Endothelial cell of umbilical vein (primary cell): ENCODE measurements at regions of chr15 and their contacts with region 1.

Region 1: DNA sequence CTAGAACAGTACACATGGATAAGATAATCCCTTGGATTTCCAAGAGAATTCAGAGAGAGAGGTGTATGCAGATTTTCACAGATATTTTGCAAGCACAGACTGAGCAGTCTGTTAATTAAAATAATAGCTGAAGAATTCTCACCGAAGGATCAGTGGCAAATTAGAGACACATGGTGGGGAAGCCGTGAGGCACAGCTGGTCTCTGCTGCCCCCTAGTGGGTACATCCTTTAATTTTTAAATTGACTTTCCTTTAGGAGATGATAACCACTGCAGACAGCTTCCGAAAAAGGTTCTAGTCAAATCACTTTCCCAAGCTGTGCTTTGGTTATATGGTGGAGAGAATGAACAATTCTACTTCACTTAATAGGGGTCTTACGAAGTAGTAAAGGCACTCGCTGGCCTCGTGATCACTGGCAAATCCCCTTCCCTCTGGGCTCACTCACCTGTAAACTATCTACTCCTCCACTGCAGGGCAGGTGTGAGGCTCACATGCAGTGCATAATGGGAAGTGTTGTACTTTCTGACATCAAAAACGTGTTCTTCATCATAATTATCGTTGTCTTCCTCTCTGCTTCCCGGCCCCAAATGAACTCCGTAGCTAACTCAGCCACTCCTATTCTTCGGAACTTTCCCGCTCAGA is 19.5 kb downstream of the MESD start:
- DNase-seq: peak; percentile 64
- H3K4me3 ChIP-seq: no peak overlapping the region
- H3K27ac ChIP-seq: no peak overlapping the region
- H3K4me1 ChIP-seq: no peaks in the 10 kb centered on the region
- H3K27me3 ChIP-seq: no peaks in the 10 kb centered on the region
- CTCF ChIP-seq: peak; percentile 59 to 61
- POLR2A ChIP-seq: no peak

Region 2: DNA sequence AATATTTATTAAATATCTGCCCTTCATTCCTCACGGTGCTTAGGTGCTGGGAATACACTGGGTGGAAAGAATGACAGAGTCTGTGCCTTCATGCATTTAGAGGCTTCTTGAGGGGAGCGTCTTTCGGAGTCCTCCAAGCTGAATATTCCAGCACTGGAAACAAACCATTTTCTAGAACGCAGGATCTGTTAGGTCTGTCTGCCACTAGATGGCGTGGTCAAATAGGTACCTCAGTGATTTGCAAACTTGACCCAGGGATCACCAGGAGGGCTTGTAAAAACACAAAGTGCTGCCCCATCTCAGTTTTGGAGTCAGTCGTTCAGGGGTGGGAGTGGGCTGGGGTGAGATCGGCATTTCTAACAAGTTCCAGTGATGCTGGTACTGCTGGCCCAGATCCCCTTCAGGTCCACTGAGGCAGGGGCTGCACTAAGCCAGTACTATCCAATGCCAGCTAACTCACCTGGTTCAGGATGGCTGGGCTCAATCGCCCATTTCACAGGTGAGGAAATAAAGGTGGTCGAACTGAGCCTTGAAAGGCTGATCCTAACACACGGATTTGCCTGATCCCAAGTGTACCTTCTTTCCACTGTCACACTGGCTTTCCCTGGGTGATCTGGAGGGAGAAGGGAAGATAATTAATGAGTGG is 551.1 kb before region 1 on chr15:
- CTCF ChIA-PET with region 1: interaction called, 11 read pairs
- POLR2A ChIA-PET with region 1: no interaction called
- dilution Hi-C with region 1: no loop called
- intact Hi-C with region 1: loop called (anchors 1 kb)
- DNase-seq: peak; percentile 16
- H3K4me3 ChIP-seq: no peak overlapping the region
- H3K27ac ChIP-seq: no peak overlapping the region
- H3K4me1 ChIP-seq: no peaks in the 10 kb centered on the region
- H3K27me3 ChIP-seq: peaks cover 0 to 4% of the 10 kb centered on the region in 2 experiments
- CTCF ChIP-seq: peak; percentile 63 to 73
- POLR2A ChIP-seq: no peak

Region 3: GRCh38 chr15:80455668-80456442 is 514.3 kb before region 1 on chr15:
- CTCF ChIA-PET with region 1: interaction called, 101 read pairs
- POLR2A ChIA-PET with region 1: no interaction called
- dilution Hi-C with region 1: no loop called
- intact Hi-C with region 1: loop called (anchors 1 kb)
- DNase-seq: peak; percentile 63
- H3K4me3 ChIP-seq: no peak overlapping the region
- H3K27ac ChIP-seq: no peak overlapping the region
- H3K4me1 ChIP-seq: no peaks in the 10 kb centered on the region
- H3K27me3 ChIP-seq: peaks cover 1 to 3% of the 10 kb centered on the region in 2 experiments
- CTCF ChIP-seq: peak; percentile 85 to 94
- POLR2A ChIP-seq: no peak

Region 4: GRCh38 chr15:80660122-80660521 is 310.0 kb before region 1 on chr15:
- CTCF ChIA-PET with region 1: interaction called, 6 read pairs
- POLR2A ChIA-PET with region 1: no interaction called
- dilution Hi-C with region 1: no loop called
- intact Hi-C with region 1: loop called (anchors 2 kb)
- DNase-seq: peak; percentile 24
- H3K4me3 ChIP-seq: no peak overlapping the region
- H3K27ac ChIP-seq: no peak overlapping the region
- H3K4me1 ChIP-seq: no peaks in the 10 kb centered on the region
- H3K27me3 ChIP-seq: peaks cover 0 to under 1% of the 10 kb centered on the region in 2 experiments
- CTCF ChIP-seq: peak; percentile 17 to 30
- POLR2A ChIP-seq: no peak

Region 5: GRCh38 chr15:80893777-80894176 is 76.4 kb before region 1 on chr15:
- CTCF ChIA-PET with region 1: interaction called, 5 read pairs
- POLR2A ChIA-PET with region 1: no interaction called
- dilution Hi-C with region 1: no loop called
- intact Hi-C with region 1: loop called (anchors 5 kb)
- DNase-seq: no peak
- H3K4me3 ChIP-seq: no peak overlapping the region
- H3K27ac ChIP-seq: no peak overlapping the region
- H3K4me1 ChIP-seq: no peaks in the 10 kb centered on the region
- H3K27me3 ChIP-seq: no peaks in the 10 kb centered on the region
- CTCF ChIP-seq: no peak
- POLR2A ChIP-seq: no peak

Region 6: GRCh38 chr15:80934761-80935221 is 35.3 kb before region 1 on chr15:
- CTCF ChIA-PET with region 1: interaction called, 10 read pairs
- POLR2A ChIA-PET with region 1: no interaction called
- dilution Hi-C with region 1: no loop called
- intact Hi-C with region 1: loop called (anchors 2 kb)
- DNase-seq: peak; percentile 63
- H3K4me3 ChIP-seq: no peak overlapping the region
- H3K27ac ChIP-seq: peak overlapping the region; percentile 63
- H3K4me1 ChIP-seq: peaks cover 18% of the 10 kb centered on the region
- H3K27me3 ChIP-seq: no peaks in the 10 kb centered on the region
- CTCF ChIP-seq: no peak
- POLR2A ChIP-seq: no peak

Region 7: GRCh38 chr15:80957556-80957955 is 12.6 kb before region 1 on chr15:
- CTCF ChIA-PET with region 1: interaction called, 16 read pairs
- POLR2A ChIA-PET with region 1: no interaction called
- dilution Hi-C with region 1: no loop called
- intact Hi-C with region 1: no loop called
- DNase-seq: no peak
- H3K4me3 ChIP-seq: no peak overlapping the region
- H3K27ac ChIP-seq: no peak overlapping the region
- H3K4me1 ChIP-seq: no peaks in the 10 kb centered on the region
- H3K27me3 ChIP-seq: no peaks in the 10 kb centered on the region
- CTCF ChIP-seq: no peak
- POLR2A ChIP-seq: no peak

Region 8: DNA sequence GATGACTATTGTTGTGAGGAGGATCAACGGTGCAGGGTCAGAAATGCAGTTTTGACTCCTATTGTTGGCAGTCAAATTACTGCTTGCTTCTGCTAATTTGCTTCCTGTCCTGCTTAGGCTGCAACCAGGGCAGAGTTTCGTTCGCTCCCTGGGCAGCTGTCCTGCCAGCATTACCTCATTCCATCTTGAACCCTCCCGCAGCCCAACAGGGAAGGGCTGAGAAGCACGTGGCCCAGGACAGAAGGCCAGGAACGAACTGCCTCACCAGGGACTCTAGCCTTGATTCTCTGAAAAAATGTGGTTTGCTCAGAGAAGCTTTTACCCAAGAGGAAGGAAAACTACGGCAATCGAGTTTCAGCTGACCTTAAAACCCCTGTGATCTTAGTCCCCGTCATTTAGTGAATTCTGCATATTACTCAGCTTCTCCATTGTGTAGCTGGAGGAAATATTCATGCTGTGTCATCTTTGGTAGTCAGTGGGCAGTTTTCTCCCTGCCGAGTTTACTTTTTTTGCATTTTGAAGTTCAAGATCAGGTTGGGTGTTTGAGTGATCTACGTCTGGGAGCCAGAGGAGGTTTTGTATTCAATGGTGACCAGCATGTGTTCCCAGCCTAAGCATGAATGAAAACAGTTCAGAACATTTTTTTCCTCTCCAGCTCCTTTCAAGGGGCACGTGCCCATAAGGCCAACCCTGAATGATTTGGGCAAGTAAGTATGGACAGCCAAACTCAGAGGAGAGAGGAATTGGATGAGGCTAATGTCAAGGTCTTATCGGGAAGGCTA is 53.5 kb after region 1 on chr15:
- CTCF ChIA-PET with region 1: no interaction called
- POLR2A ChIA-PET with region 1: no interaction called
- dilution Hi-C with region 1: no loop called
- intact Hi-C with region 1: no loop called
- DNase-seq: peak; percentile 91
- H3K4me3 ChIP-seq: no peak overlapping the region
- H3K27ac ChIP-seq: peak overlapping the region; percentile 97
- H3K4me1 ChIP-seq: peaks cover 23% of the 10 kb centered on the region
- H3K27me3 ChIP-seq: no peaks in the 10 kb centered on the region
- CTCF ChIP-seq: no peak
- POLR2A ChIP-seq: no peak